PC-9 (cell line): ENCODE measurements at regions of chr15 and their contacts with region 1.

Region 1: DNA sequence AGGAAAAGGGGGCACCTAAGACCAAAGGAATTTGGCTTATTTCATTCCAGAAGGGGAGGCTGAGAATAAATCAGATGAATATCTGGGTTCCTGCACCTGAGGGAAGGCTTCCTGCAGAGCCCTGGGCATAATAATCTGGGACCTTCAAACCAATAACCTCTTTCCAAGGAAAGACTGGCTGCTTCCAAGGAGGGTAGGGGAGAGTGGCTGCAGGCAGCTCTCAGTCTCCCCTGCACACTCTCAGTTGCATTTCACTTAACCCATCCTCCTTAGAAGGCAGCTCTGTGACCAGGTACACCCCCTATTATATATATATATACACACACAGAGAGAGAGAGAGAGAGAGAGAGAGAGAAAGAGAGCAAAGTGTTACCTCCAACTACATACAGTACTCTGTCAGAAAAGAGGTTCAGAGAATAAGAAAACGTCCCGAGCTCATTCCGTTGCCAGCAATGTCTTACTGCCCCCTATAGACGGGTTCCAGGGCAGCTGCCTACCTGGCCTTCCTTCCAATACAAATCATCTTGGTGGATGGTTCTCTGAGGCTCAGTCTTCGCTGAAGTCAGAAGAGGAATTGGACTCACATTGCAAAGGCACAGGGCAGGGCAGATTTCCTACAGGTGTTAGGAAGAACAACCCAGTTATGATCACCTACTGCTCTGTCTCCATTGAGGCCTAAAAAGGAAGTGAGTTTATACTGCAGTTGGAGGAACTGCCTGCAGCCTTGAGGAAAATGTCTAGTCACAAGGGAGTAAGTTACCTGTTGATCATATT is 26.1 kb downstream of the CAPN3 start:
- DNase-seq: peak in 1 of 2 experiments; percentile 44
- H3K4me3 ChIP-seq: no peak overlapping the region
- H3K27ac ChIP-seq: no peak overlapping the region
- H3K4me1 ChIP-seq: no peaks in the 10 kb centered on the region
- H3K27me3 ChIP-seq: no peaks in the 10 kb centered on the region; the same call in 1 of the 2 replicates
- CTCF ChIP-seq: peak; percentile 75

Region 2: GRCh38 chr15:42157981-42158765 is 227.2 kb before region 1 on chr15:
- CTCF ChIA-PET with region 1: interaction called, 4 read pairs
- POLR2A ChIA-PET with region 1: interaction called, 3 read pairs
- intact Hi-C with region 1: loop called (anchors 10 kb)
- DNase-seq: no peak
- H3K4me3 ChIP-seq: no peak overlapping the region
- H3K27ac ChIP-seq: no peak overlapping the region
- H3K4me1 ChIP-seq: peaks cover 17% of the 10 kb centered on the region
- H3K27me3 ChIP-seq: no peaks in the 10 kb centered on the region
- CTCF ChIP-seq: no peak

Region 3: DNA sequence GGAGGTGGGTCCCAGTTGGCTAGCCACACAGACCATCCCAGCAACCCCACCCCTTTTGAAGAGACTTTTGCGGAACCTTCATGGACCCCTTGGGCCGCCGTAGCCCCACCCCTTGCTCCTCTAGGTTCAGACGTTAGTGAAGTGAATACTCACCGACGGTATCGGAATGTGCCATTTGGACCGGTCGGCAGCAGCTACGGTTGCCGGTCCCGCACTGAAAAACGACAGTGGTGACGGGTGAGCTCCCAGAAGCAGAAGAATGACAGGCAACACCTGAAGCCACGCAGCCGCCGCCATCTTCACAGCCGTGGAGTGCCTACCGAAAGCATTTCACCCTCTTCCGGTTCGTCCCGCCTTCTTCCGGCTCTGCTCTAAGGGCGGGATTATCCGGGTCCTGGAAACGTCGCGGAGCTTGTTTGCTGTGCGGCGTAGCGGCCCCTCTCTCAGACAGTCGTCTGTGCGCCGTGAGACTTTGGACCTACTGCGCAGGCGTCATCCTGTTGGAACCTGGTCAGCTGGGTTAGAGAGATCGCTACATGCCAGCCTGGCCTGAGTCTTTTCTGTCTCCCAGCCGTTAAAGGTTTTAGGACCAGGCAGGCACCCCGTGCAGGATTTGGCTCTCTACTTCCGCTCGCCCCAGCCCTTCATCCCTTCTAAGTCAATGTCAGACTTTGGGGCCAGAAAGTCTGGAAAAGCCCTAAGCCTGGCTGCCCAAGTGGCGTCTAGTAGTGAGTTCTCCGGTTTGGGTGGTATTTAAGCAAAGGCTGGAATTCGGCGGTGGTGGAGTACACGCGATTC is 112.1 kb before region 1 on chr15 and contains the starts of genes GANC and TMEM87A:
- CTCF ChIA-PET with region 1: interaction called, 3 read pairs
- POLR2A ChIA-PET with region 1: interaction called, 3 read pairs
- intact Hi-C with region 1: loop called (anchors 10 kb)
- DNase-seq: peak; percentile 91 to 95
- H3K4me3 ChIP-seq: peak within 1 kb of the TSS; percentile 74
- H3K27ac ChIP-seq: peak within 1 kb of the TSS; percentile 84
- H3K4me1 ChIP-seq: peaks cover 33% of the 10 kb centered on the region
- H3K27me3 ChIP-seq: no peaks in the 10 kb centered on the region
- CTCF ChIP-seq: no peak
- total RNA-seq, gene GANC: 13.9 and 16.3 TPM in 2 replicates
- total RNA-seq, gene TMEM87A: 43.9 and 45.1 TPM in 2 replicates

Region 4: GRCh38 chr15:42371125-42371524 is 14.3 kb before region 1 on chr15:
- CTCF ChIA-PET with region 1: no interaction called
- POLR2A ChIA-PET with region 1: no interaction called
- intact Hi-C with region 1: no loop called
- DNase-seq: no peak
- H3K4me3 ChIP-seq: no peak overlapping the region
- H3K27ac ChIP-seq: no peak overlapping the region
- H3K4me1 ChIP-seq: no peaks in the 10 kb centered on the region
- H3K27me3 ChIP-seq: no peaks in the 10 kb centered on the region
- CTCF ChIP-seq: peak; percentile 37